ENCODE measurements at regions of chr11 and their contacts with region 1.

Region 1: DNA sequence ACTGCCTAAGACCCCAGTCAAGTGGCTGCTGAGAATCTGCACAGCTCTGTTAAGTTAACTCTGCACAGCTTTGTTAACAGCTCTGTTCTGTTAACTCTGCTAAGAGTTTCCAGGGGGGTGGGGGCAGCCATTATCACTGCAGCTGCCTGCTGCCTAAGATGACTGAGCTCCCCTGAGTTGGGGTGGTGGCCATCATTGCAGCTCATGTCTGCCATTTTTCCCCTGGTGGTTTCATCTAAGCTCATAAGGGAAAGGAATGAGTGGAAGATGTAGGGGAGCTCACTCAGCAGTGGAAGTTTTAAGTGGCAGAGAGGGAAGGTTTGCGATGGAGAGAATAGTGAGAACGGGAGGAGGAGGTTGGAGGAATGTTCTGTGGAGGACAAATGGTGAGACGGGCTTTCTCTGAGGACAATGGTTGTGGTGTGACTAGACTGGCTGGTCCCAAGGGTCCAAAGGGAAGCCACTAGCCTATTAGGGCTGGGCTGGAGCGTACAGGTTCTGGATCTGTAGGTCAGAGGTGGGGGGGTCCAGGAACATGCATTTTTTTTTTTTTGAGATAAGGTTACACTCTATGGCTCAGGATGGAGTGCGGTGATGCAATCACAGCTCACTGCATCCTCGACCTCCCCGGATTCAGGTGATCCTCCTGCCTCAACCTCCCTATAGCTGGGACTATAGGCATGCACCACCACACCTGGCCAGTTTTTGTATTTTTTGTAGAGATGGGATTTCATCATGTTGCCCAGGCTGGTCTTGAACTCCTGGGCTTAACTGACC is 13.5 kb upstream of the PLET1 start:
- DNase-seq: no peak
- ATAC-seq: no peak
- H3K4me3 ChIP-seq: no peak overlapping the region
- H3K27ac ChIP-seq: no peak overlapping the region
- H3K4me1 ChIP-seq: no peaks in the 10 kb centered on the region
- H3K27me3 ChIP-seq: no peaks in the 10 kb centered on the region
- CTCF ChIP-seq: no peak
- POLR2A ChIP-seq: no peak

Region 2: GRCh38 chr11:112226062-112226830 is 47.9 kb before region 1 on chr11 and contains the start of gene PTS:
- intact Hi-C with region 1: loop called in 1 of 10 experiments (anchors 2 kb)
- DNase-seq: peak; percentile 89 to 94 (median 91)
- ATAC-seq: peak; percentile 96 to 98 (median 98)
- H3K4me3 ChIP-seq: peak within 1 kb of the TSS; percentile 52 to 91 (median 86)
- H3K27ac ChIP-seq: peak within 1 kb of the TSS; percentile 87 to 100 (median 98)
- H3K4me1 ChIP-seq: peaks cover 0 to 17% (median 7%) of the 10 kb centered on the region in 12 donors
- H3K27me3 ChIP-seq: no peaks in the 10 kb centered on the region
- CTCF ChIP-seq: no peak
- POLR2A ChIP-seq: peak in 1 of 2 donors; percentile 89
- total RNA-seq, gene PTS: 21.6 to 45.8 (median 29.9) TPM

Measured in heart left ventricle (tissue), 16 donors.